ENCODE measurements at regions of chr1 and their contacts with region 1.

Region 1: DNA sequence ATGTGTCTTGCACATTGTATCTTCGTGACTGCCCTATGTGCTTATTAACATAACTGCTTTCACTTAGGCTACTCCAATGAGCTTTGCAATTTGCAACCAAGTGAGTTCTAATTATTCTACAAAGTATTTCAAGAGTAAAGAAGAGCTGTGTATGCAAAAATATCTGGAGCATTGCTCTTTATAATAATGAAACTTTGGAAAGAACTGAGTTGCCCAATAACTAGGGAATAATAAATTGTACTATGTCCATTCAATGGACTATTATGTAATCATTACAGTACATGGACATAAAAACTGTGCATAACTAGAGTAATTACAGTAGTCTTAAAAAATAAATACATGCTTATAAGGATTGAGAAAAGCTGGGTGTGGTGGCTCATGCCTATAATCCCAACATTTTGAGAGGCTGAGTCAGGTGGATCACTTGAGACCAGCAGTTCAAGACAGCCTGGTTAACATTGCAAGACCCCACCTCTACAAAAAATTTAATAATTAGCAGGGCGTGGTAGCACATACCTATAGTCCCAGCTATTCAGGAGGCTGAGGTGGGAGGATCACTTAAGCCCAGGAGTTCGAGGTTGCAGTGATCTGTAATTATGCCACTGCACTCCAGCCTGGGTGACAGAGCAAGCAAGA is 70.3 kb upstream of the JAK1 start:
- DNase-seq: no peak
- ATAC-seq: no peak
- H3K4me3 ChIP-seq: no peak overlapping the region
- H3K4me3 Mint-ChIP-seq: no peak overlapping the region
- H3K27ac ChIP-seq: no peak overlapping the region
- H3K27ac Mint-ChIP-seq: no peak overlapping the region
- H3K4me1 ChIP-seq: peaks cover 11 to 12% of the 10 kb centered on the region in 2 donors
- H3K4me1 Mint-ChIP-seq: peaks cover 14% of the 10 kb centered on the region
- H3K27me3 ChIP-seq: no peaks in the 10 kb centered on the region
- H3K27me3 Mint-ChIP-seq: no peaks in the 10 kb centered on the region
- CTCF ChIP-seq: no peak

Region 2: DNA sequence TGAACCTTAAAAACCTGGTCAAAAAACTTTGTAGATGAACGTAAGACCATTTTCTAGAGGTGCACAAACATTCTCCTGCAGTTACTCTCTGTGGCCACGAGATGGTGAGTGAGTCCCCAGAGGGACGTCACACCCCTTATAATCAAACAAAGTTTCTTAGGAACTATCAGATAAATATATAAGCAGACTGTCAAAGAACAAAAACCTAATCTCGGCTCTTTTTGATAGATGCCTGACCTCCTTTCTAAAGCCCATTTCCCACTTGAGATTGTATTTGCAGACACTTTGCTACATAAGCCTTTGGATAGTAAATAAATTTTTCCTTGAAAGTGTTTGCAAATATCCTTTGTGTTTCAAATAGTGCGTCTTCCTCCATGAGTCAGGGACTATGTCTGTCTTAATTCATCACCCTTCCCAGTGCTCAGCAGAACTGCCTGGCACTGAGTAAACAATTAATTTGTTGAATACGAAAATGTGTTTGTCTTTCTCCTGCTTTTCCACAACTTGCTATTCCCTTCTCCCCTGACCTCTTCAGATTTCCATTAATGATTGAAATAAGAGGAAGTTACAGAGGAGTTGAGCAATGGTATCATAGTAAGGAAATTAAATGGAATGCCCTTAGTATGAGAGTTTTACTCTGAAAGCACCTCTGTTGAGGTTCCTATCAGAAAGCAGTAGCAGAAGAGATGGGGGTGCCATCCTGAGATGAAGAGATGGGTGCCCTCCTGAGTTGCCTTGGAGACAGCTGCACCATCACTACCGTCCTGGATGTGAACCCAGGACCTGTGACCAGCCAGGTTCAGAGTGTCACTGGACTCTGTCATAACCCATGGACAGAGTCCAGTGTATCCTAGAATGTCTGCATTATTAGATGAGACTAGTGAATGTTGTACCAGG is 349.6 kb before region 1 on chr1:
- CTCF ChIA-PET with region 1: interaction called, 4 read pairs
- POLR2A ChIA-PET with region 1: no interaction called
- intact Hi-C with region 1: loop called (anchors 1 kb)
- DNase-seq: peak; percentile 55
- ATAC-seq: peak; percentile 69
- H3K4me3 ChIP-seq: no peak overlapping the region
- H3K4me3 Mint-ChIP-seq: no peak overlapping the region
- H3K27ac ChIP-seq: no peak overlapping the region
- H3K27ac Mint-ChIP-seq: no peak overlapping the region
- H3K4me1 ChIP-seq: no peaks in the 10 kb centered on the region
- H3K4me1 Mint-ChIP-seq: no peaks in the 10 kb centered on the region
- H3K27me3 ChIP-seq: no peaks in the 10 kb centered on the region
- H3K27me3 Mint-ChIP-seq: peaks cover 11% of the 10 kb centered on the region
- CTCF ChIP-seq: peak; percentile 89

Region 3: DNA sequence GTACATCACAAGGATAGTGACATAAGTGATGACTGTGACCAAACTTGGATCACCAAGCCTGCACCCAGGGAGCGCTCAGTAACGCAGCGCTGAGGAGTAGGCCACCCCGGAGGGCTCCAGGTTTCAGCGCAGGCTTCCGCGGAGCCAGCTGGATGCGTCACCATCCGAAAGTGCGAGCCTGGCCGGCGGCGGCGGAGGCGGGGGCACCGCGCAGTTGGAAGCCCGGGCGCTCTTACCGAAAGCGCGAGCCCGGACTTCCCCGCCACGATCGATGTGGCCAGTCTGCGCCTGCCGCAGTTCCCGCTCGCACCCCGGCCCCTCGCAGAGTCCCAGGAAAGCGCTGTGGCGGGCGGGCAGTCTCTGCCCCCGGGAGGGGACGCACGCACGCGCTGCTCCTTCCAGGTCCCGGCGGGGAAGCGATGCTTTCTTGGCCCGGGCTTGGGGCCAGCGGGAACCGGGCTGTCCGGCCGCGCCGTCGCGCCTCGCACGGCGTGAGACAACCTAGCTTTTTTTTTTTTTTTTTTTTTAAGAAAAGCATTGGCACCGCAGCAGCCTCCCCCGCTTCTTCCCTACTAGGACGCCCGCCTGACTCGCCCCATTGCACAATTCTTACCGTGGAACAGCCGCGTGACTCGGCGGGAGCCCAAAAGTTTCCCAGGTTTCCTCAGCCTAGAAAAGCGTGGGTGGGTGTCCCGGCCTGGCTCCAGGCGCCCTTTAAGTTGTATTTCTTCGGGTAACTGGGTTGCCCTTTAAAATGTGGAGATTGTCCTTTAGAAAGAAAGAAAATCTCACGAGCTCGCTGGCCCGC is 34.0 kb before region 1 on chr1:
- CTCF ChIA-PET with region 1: interaction called, 3 read pairs
- POLR2A ChIA-PET with region 1: no interaction called
- intact Hi-C with region 1: loop called (anchors 2 kb)
- DNase-seq: peak; percentile 75
- ATAC-seq: peak; percentile 76
- H3K4me3 ChIP-seq: peak overlapping the region; percentile 39 to 74 (median 61)
- H3K4me3 Mint-ChIP-seq: peak overlapping the region; percentile 86
- H3K27ac ChIP-seq: peak overlapping the region in 1 of 2 donors; percentile 14
- H3K27ac Mint-ChIP-seq: peak overlapping the region; percentile 37
- H3K4me1 ChIP-seq: peaks cover 19 to 23% of the 10 kb centered on the region in 2 donors
- H3K4me1 Mint-ChIP-seq: peaks cover 26% of the 10 kb centered on the region
- H3K27me3 ChIP-seq: peaks cover 0 to 18% (median 5%) of the 10 kb centered on the region in 4 experiments
- H3K27me3 Mint-ChIP-seq: no peaks in the 10 kb centered on the region
- CTCF ChIP-seq: no peak

Region 4: DNA sequence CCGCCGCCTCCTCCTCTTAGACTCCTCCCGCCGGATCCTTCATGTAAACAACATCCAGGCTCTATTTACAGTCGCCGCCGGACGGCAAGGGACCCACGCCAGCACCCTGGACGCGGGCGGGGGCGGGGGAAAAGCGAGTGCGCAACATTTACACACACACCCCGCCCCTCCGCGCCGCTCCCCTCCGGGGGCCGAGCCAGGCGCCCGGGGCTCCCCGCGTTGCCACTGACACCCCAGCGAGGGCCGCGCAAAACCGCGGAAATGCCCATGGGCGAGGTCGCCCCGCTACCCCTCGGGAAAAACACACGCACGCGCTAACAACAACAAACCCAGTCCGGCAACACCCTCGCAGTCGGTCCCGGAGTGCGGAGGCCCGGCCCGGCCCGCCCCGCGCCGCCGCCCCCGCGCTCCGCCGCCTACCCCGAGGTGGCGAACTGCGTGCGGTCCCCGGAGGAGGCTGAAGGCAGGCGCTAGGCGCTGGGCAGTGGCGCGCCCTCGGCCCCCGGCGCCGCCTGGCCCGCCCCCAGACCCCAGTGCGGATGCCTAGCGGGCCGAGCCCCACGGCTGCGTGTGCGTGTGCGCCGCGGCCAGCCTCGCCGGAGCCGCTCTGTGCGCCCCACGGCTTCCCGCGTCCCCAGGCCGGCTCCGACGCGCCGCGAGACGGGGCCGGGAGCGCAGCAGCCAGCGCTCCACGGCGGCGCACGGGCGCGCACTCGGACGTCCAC is 30.3 kb after region 1 on chr1:
- CTCF ChIA-PET with region 1: no interaction called
- POLR2A ChIA-PET with region 1: no interaction called
- intact Hi-C with region 1: no loop called
- DNase-seq: peak; percentile 89
- ATAC-seq: peak; percentile 70
- H3K4me3 ChIP-seq: peak overlapping the region; percentile 65 to 90 (median 70)
- H3K4me3 Mint-ChIP-seq: peak overlapping the region; percentile 97
- H3K27ac ChIP-seq: peak overlapping the region; percentile 71 to 85
- H3K27ac Mint-ChIP-seq: peak overlapping the region; percentile 98
- H3K4me1 ChIP-seq: peaks cover 21 to 25% of the 10 kb centered on the region in 2 donors
- H3K4me1 Mint-ChIP-seq: peaks cover 53% of the 10 kb centered on the region
- H3K27me3 ChIP-seq: no peaks in the 10 kb centered on the region
- H3K27me3 Mint-ChIP-seq: no peaks in the 10 kb centered on the region
- CTCF ChIP-seq: no peak

Measured in B cell (primary cell).